ENCODE measurements at regions of chr7 and their contacts with region 1.

Region 1: GRCh38 chr7:150448789-150449147 is 1.7 kb upstream of the GIMAP8 start:
- DNase-seq: peak; percentile 93
- ATAC-seq: peak; percentile 58
- H3K4me3 Mint-ChIP-seq: peak overlapping the region; percentile 97
- H3K27ac Mint-ChIP-seq: peak overlapping the region; percentile 95
- H3K4me1 Mint-ChIP-seq: peaks cover 55% of the 10 kb centered on the region
- H3K27me3 Mint-ChIP-seq: no peaks in the 10 kb centered on the region

Region 2: DNA sequence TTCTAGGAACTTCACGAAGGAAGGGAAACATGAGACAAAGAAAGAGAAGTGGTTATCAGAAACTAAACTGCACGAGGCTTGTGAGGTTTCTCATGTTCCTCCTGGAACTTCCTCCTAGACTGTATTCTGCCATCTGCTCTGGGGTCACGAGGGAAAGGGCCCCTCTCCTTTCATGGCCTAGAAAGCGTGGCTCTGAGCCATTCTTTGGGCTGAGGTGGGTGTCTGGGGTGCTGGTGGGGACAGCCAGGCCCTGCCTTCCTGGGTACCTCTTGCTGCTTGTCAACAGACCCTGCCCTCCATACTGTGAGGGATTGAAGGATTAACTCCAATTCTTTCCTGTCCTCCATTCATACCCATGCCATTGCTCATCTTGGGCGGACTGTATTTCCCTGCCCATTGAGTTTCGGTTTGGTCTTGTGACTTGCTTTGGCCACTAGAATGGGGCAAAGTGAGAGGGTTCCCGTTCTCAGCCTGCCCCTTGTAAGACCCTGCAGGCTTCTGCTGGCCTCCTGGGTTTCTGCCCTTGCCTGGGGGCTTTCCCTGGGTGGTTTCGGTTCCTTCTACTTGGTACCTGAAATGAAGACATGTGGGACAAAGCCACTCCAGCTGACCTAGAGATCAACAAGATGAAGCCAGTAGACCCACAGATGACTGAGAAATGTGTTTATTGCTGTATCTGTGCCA is 13.2 kb before region 1 on chr7:
- CTCF ChIA-PET with region 1: interaction called, 18 read pairs
- POLR2A ChIA-PET with region 1: interaction called, 3 read pairs
- DNase-seq: no peak
- ATAC-seq: no peak
- H3K4me3 Mint-ChIP-seq: no peak overlapping the region
- H3K27ac Mint-ChIP-seq: no peak overlapping the region
- H3K4me1 Mint-ChIP-seq: peaks cover 60% of the 10 kb centered on the region
- H3K27me3 Mint-ChIP-seq: no peaks in the 10 kb centered on the region

Region 3: GRCh38 chr7:150507947-150508602 is 59.3 kb after region 1 on chr7:
- CTCF ChIA-PET with region 1: interaction called, 35 read pairs
- POLR2A ChIA-PET with region 1: interaction called, 316 read pairs
- DNase-seq: peak; percentile 34
- ATAC-seq: peak; percentile 62
- H3K4me3 Mint-ChIP-seq: peak overlapping the region; percentile 37
- H3K27ac Mint-ChIP-seq: peak overlapping the region; percentile 72
- H3K4me1 Mint-ChIP-seq: peaks cover 90% of the 10 kb centered on the region
- H3K27me3 Mint-ChIP-seq: no peaks in the 10 kb centered on the region

Region 4: GRCh38 chr7:150567169-150567568 is 118.4 kb after region 1 on chr7 and contains the start of gene GIMAP4:
- CTCF ChIA-PET with region 1: interaction called, 60 read pairs
- POLR2A ChIA-PET with region 1: interaction called, 73 read pairs
- DNase-seq: peak; percentile 59
- ATAC-seq: peak; percentile 61
- H3K4me3 Mint-ChIP-seq: peak within 1 kb of the TSS; percentile 88
- H3K27ac Mint-ChIP-seq: peak within 1 kb of the TSS; percentile 90
- H3K4me1 Mint-ChIP-seq: peaks cover 59% of the 10 kb centered on the region
- H3K27me3 Mint-ChIP-seq: no peaks in the 10 kb centered on the region
- total RNA-seq, gene GIMAP4: 174 to 186 TPM

Region 5: GRCh38 chr7:150595361-150595760 is 146.6 kb after region 1 on chr7:
- CTCF ChIA-PET with region 1: no interaction called
- POLR2A ChIA-PET with region 1: no interaction called
- DNase-seq: no peak
- ATAC-seq: no peak
- H3K4me3 Mint-ChIP-seq: no peak overlapping the region
- H3K27ac Mint-ChIP-seq: no peak overlapping the region
- H3K4me1 Mint-ChIP-seq: peaks cover 17% of the 10 kb centered on the region
- H3K27me3 Mint-ChIP-seq: no peaks in the 10 kb centered on the region

Region 6: DNA sequence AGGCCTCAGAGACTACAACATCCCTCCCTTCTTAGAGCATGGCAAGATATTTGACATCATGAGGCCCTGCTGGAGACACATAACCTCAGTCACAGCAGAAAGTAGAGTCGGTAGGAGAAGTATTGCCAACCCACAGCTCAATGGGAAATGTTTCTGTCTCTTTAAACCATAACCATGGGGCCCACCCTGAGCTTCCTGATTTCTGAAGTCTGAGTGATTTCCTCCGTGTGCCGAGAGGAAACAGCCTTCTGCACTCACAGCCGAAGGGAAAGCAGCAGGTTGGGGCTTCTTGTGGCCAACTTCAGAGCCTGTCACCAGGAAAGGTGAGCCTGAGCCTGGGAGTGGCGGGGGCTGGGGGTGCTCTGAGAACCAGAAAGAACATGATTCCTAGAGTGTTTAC is 267.6 kb after region 1 on chr7 and contains the start of gene GIMAP1:
- CTCF ChIA-PET with region 1: interaction called, 32 read pairs
- POLR2A ChIA-PET with region 1: interaction called, 23 read pairs
- DNase-seq: peak; percentile 71
- ATAC-seq: peak; percentile 85
- H3K4me3 Mint-ChIP-seq: peak within 1 kb of the TSS; percentile 97
- H3K27ac Mint-ChIP-seq: peak within 1 kb of the TSS; percentile 87
- H3K4me1 Mint-ChIP-seq: peaks cover 51% of the 10 kb centered on the region
- H3K27me3 Mint-ChIP-seq: no peaks in the 10 kb centered on the region
- total RNA-seq, gene GIMAP1: 19.0 to 20.2 TPM

Region 7: DNA sequence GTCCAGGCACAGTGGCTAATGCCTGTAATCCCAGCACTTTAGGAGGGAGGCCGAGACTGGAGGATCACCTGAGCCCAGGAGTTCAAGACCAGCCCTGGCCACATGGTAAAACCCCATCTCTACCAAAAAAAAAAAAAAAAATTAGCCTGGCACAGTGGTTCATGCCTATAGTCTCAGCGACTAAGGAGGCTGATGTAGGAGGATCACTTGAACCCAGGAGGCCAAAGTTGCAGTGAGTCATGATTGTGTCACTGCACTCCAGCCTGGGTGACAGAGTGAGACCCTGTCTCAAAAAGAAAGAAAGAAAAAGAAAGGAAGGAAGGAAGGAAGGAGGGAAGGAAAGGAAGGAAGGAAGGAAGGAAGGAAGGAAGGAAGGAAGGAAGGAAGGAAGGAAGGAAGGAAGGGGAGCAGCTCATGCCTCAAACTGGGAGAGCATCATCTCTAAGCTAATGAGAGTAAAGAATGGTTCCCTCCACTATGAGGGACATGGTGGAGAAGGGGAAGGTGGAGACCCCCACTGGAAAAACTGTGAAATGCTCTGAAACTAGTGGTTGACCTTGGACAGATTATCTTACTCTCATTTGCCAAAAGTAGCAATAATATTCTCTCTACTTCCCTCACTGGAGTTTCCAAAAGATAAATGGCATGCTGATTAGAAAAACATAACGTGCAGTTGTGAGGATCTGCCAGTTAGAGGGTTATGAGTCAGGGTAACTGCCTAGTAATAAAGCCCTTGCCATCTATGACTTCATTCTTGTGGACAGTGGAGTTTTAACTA is 305.2 kb after region 1 on chr7:
- CTCF ChIA-PET with region 1: interaction called, 85 read pairs
- POLR2A ChIA-PET with region 1: interaction called, 38 read pairs
- DNase-seq: peak; percentile 50
- ATAC-seq: peak; percentile 21
- H3K4me3 Mint-ChIP-seq: peak overlapping the region; percentile 40
- H3K27ac Mint-ChIP-seq: peak overlapping the region; percentile 86
- H3K4me1 Mint-ChIP-seq: peaks cover 70% of the 10 kb centered on the region
- H3K27me3 Mint-ChIP-seq: no peaks in the 10 kb centered on the region